HEK293T (cell line): ENCODE measurements at regions of chr22 and their contacts with region 1.

Region 1: GRCh38 chr22:35257321-35258190 is at the start of gene HMGXB4:
- DNase-seq: peak; percentile 97

Region 2: DNA sequence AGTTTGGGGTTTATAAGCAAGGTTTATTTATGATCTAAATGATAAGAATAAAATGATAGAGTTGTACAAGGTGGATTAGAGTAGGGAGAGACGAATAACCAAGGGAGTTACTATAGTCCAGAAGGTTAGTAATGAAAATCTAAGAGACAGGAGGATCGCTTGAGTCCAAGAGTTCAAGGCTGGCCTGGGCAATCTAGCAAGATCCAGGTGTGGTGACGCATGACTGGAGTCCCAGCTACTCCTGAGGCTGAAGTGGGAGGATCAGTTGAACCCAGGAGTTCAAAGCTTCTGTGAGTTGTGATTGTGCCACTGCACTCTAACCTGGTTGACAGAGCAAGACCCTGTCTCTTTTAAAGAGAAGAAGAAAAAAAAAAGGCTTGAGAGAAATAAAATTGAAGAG is 12.1 kb after region 1 on chr22:
- CTCF ChIA-PET with region 1: no interaction called
- POLR2A ChIA-PET with region 1: interaction called, 14 read pairs
- DNase-seq: no peak

Region 3: DNA sequence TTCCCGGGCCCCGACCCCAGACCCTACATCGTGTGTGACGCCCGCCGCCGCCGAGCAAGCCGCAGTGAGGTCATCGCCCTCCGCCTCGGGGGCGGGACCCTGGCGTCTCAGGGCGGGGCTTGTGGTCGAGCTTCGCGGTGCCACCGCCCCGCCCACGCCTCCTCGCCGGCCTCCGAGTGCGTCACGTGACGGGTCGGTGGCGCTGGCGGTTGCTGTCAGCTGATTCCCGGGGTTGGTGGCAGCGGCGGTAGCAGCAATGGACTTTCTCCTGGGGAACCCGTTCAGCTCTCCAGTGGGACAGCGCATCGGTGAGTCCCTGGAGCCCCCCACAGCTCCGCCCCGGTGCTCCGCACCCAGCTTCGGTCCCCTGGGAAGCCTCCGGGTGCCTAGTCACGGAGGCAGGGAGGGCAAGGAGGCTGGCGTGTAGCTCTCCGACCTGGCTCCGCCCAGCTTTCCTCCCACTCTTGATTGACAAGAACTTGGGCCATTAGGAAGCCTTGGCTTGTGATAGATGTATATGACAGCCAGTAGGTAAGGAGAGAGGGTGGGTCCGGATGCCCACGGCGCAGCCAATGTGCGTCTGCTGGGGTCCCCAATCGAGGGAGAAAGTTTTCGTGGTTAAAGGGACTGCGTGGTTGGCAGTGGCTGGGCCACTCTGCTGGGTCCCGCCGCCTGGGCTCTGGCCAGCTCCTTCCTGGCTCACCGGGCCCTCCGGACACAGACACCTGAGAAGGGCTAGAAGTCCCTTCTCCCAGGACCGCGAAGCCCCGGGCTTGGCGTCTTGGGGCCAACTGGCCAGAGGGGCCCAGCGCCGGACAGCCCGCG is 42.3 kb after region 1 on chr22 and contains the start of gene TOM1:
- CTCF ChIA-PET with region 1: no interaction called
- POLR2A ChIA-PET with region 1: interaction called, 14 read pairs
- DNase-seq: peak; percentile 100

Region 4: GRCh38 chr22:35498026-35498800 is 240.7 kb after region 1 on chr22:
- CTCF ChIA-PET with region 1: no interaction called
- POLR2A ChIA-PET with region 1: no interaction called
- DNase-seq: peak; percentile 40